Calu3 (cell line): ENCODE measurements at regions of chrX and their contacts with region 1.

Region 1: GRCh38 chrX:120428309-120428708 is 40.8 kb downstream of the LAMP2 start:
- DNase-seq: peak; percentile 2
- H3K4me3 Mint-ChIP-seq: no peak overlapping the region
- H3K27ac Mint-ChIP-seq: no peak overlapping the region
- H3K4me1 Mint-ChIP-seq: peaks cover 17% of the 10 kb centered on the region
- H3K27me3 Mint-ChIP-seq: no peaks in the 10 kb centered on the region
- CTCF ChIP-seq: no peak

Region 2: DNA sequence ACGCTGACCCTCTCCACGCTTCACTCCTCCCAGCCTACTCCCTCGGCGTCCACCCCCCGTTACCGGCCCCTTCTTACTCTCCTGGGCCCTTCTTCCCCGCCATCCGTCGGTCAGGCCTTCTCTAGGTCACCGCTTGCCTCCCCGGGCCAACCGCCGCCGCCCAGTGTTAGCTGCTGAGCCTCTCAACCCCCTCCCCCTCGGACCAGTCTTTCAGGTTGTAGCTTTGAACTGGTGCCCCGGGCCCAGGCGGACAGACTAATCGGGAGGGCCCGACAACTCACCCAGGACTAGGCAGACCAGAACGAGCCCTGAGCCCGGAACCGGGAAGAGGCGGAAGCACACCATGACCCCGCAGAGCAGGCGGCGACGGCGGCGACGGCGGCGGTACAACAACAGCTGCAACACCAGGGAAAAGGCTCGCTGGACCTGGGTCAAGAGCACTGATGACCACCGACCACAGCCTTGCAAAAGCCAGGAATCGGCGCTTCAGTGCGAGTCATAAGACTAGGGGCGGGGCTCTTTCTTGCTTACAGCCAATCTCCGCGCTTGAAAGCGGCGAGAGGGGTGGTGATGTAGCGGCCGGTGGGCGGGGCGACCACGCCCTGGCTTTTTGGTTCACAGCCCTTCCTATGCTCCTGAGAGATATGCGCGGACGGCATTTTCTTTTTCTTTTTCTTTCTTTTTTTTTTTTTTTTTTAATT is 40.7 kb after region 1 on chrX and contains the start of gene LAMP2:
- CTCF ChIA-PET with region 1: no interaction called
- intact Hi-C with region 1: loop called (anchors 5 kb)
- DNase-seq: peak; percentile 88
- H3K4me3 Mint-ChIP-seq: peak within 1 kb of the TSS; percentile 87
- H3K27ac Mint-ChIP-seq: peak within 1 kb of the TSS; percentile 77
- H3K4me1 Mint-ChIP-seq: no peaks in the 10 kb centered on the region
- H3K27me3 Mint-ChIP-seq: no peaks in the 10 kb centered on the region
- CTCF ChIP-seq: no peak
- total RNA-seq, gene LAMP2: 120 and 132 TPM in 2 replicates